Activated T-helper 1 cell treated with anti-CD3 and anti-CD28 coated beads, Interleukin-12 subunit alpha, Interleukin-12 subunit beta, Interleukin-2, Interleukin-4 antibody, amounts not matched to agents 30 ng/mL and 10 ng/mL and 1 ng/mL, durations not matched to agents 14 hours and 24 hours and 36 hours (primary cell): ENCODE measurements at regions of chr7 and their contacts with region 1.

Region 1: GRCh38 chr7:138008547-138009349 is 6.9 kb upstream of the CREB3L2 start:
- DNase-seq: peak; percentile 24
- H3K4me3 Mint-ChIP-seq: no peak overlapping the region
- H3K27ac Mint-ChIP-seq: no peak overlapping the region
- H3K4me1 Mint-ChIP-seq: peaks cover 6% of the 10 kb centered on the region
- H3K27me3 Mint-ChIP-seq: peaks cover 14% of the 10 kb centered on the region

Region 2: DNA sequence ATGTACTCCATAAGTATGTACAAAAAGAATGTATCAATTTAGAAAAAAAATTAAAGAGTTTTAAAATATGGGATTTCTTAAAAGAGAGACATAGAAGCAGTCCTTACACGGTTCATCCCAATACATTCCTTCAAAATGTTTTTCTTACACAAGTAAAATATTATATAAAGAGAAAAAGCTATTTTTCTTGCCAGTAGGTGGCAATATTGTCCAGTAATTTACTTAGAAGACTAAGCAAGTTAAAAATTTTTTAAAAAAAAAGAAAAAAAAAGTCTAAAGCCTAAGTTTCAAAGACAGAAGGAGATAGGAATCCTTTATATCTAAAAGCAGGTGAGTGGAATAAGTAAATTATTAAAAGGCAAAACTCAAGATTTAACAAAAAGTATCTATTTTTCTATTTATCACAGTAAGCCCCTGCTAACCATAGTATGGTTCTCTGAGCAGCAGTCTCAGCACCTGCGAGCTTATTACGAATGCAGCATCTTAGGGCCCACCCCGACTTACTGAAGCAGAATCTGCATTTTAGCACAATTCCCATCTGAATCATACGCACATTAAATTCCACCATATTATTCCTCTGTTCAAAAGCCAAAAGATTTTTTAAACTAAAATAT is 402.6 kb before region 1 on chr7:
- intact Hi-C with region 1: loop called (anchors 2 kb)
- DNase-seq: no peak
- H3K4me3 Mint-ChIP-seq: no peak overlapping the region
- H3K27ac Mint-ChIP-seq: no peak overlapping the region
- H3K4me1 Mint-ChIP-seq: no peaks in the 10 kb centered on the region
- H3K27me3 Mint-ChIP-seq: peaks cover 4% of the 10 kb centered on the region

Region 3: DNA sequence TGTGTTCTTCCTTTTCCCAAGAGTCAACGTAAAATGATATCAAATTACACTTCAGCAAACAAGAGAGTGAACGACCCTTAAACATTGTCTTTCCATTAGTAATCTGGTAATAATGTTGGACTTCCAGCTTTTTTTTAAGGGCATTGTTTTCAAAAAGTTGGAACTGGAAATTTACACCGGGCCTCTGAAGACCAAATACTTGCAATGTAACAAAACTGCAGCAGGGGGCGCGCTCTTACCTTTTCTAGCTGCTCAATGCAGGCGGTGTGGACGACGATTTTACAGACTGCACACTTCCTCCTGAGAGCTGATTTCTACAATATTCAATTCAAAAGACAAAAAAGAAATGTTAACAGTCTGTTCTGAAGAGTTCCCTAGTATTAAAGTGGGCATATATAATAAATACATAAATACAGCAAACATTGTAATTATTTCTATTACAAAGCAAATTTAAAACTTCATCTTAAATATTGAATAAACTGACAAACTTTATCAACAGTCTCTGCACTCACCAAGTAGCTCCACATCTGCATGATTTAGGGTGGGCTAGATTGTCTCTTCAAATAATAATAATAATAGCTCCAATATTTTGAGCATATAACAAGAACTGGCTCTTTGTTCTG is 352.4 kb before region 1 on chr7:
- intact Hi-C with region 1: loop called (anchors 1 kb)
- DNase-seq: peak; percentile 35
- H3K4me3 Mint-ChIP-seq: no peak overlapping the region
- H3K27ac Mint-ChIP-seq: no peak overlapping the region
- H3K4me1 Mint-ChIP-seq: no peaks in the 10 kb centered on the region
- H3K27me3 Mint-ChIP-seq: peaks cover 2% of the 10 kb centered on the region

Region 4: GRCh38 chr7:137816696-137817320 is 191.9 kb before region 1 on chr7:
- intact Hi-C with region 1: loop called (anchors 2 kb)
- DNase-seq: no peak
- H3K4me3 Mint-ChIP-seq: no peak overlapping the region
- H3K27ac Mint-ChIP-seq: no peak overlapping the region
- H3K4me1 Mint-ChIP-seq: no peaks in the 10 kb centered on the region
- H3K27me3 Mint-ChIP-seq: no peaks in the 10 kb centered on the region

Region 5: GRCh38 chr7:137882261-137882668 is 126.5 kb before region 1 on chr7:
- intact Hi-C with region 1: no loop called
- DNase-seq: peak; percentile 21
- H3K4me3 Mint-ChIP-seq: no peak overlapping the region
- H3K27ac Mint-ChIP-seq: peak overlapping the region; percentile 61
- H3K4me1 Mint-ChIP-seq: peaks cover 44% of the 10 kb centered on the region
- H3K27me3 Mint-ChIP-seq: no peaks in the 10 kb centered on the region

Region 6: GRCh38 chr7:138575897-138576428 is 567.2 kb after region 1 on chr7:
- intact Hi-C with region 1: no loop called
- DNase-seq: no peak
- H3K4me3 Mint-ChIP-seq: no peak overlapping the region
- H3K27ac Mint-ChIP-seq: no peak overlapping the region
- H3K4me1 Mint-ChIP-seq: no peaks in the 10 kb centered on the region
- H3K27me3 Mint-ChIP-seq: no peaks in the 10 kb centered on the region